Activated naive CD4-positive, alpha-beta T cell treated with anti-CD3 and anti-CD28 coated beads for 36 hours (primary cell): ENCODE measurements at regions of chr21 and their contacts with region 1.

Region 1: GRCh38 chr21:38766987-38767722 is 38.6 kb upstream of the ETS2 start:
- DNase-seq: peak; percentile 83
- H3K4me3 Mint-ChIP-seq: peak overlapping the region; percentile 51
- H3K27ac Mint-ChIP-seq: peak overlapping the region; percentile 82
- H3K4me1 Mint-ChIP-seq: peaks cover 42% of the 10 kb centered on the region
- H3K27me3 Mint-ChIP-seq: no peaks in the 10 kb centered on the region

Region 2: GRCh38 chr21:38755681-38756371 is 11.3 kb before region 1 on chr21:
- CTCF ChIA-PET with region 1: interaction called, 6 read pairs
- intact Hi-C with region 1: loop called (anchors 1 kb)
- DNase-seq: peak; percentile 41
- H3K4me3 Mint-ChIP-seq: no peak overlapping the region
- H3K27ac Mint-ChIP-seq: peak overlapping the region; percentile 44
- H3K4me1 Mint-ChIP-seq: peaks cover 8% of the 10 kb centered on the region
- H3K27me3 Mint-ChIP-seq: peaks cover 3% of the 10 kb centered on the region

Region 3: GRCh38 chr21:38787461-38788274 is 20.5 kb after region 1 on chr21:
- CTCF ChIA-PET with region 1: no interaction called
- intact Hi-C with region 1: no loop called
- DNase-seq: no peak
- H3K4me3 Mint-ChIP-seq: no peak overlapping the region
- H3K27ac Mint-ChIP-seq: no peak overlapping the region
- H3K4me1 Mint-ChIP-seq: peaks cover 6% of the 10 kb centered on the region
- H3K27me3 Mint-ChIP-seq: no peaks in the 10 kb centered on the region

Region 4: GRCh38 chr21:38798481-38798882 is 31.3 kb after region 1 on chr21:
- CTCF ChIA-PET with region 1: interaction called, 9 read pairs
- intact Hi-C with region 1: loop called (anchors 1 kb)
- DNase-seq: peak; percentile 30
- H3K4me3 Mint-ChIP-seq: no peak overlapping the region
- H3K27ac Mint-ChIP-seq: no peak overlapping the region
- H3K4me1 Mint-ChIP-seq: peaks cover 6% of the 10 kb centered on the region
- H3K27me3 Mint-ChIP-seq: peaks cover 2% of the 10 kb centered on the region

Region 5: DNA sequence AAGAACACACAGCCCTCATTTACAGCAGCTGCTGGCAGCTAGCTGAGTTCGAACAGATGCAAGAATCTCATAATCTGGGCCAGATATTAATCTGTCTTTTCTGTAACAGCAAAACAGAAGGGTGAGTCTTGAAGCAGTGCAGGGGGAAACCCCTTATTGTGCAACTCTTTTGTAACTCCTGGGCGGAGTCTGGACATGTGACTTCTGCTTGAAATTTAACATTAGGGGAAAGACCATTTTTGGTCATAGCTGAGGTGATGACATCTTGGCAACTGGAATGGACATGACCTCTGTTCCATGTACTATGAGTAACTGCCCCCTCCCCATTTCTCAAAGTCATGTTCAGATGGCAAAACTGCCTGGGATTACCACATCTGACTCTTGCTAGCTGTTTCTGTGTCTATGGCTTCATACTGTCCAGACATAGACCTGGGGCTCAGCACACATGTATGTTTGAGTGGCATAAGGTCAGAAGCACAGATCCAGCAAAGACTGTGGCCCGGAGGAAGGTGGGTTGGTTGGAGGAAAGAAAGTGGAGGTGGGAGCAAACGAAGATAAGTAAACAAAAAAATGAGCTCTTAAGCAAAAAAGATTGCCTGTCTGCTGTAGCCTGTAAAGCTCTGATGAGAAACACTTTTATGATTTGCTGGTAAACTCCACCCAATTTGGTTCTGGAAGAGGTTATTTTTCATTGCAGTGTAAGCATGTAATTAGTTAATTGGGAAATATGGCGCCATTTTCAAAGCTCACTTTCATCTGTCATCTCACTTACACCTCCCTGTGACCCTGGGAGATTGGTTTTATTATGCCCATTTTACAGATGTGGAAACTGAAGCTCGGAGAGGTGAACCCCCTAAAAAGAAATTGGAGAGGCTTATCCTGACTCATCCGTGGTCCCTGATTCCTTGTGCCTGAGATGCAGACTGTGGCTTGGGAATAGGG is 64.6 kb after region 1 on chr21:
- CTCF ChIA-PET with region 1: no interaction called
- intact Hi-C with region 1: loop called (anchors 1 kb)
- DNase-seq: peak; percentile 87
- H3K4me3 Mint-ChIP-seq: no peak overlapping the region
- H3K27ac Mint-ChIP-seq: peak overlapping the region; percentile 75
- H3K4me1 Mint-ChIP-seq: peaks cover 17% of the 10 kb centered on the region
- H3K27me3 Mint-ChIP-seq: no peaks in the 10 kb centered on the region

Region 6: GRCh38 chr21:39183237-39184007 is 416.3 kb after region 1 on chr21 and contains the start of gene PSMG1:
- CTCF ChIA-PET with region 1: no interaction called
- intact Hi-C with region 1: loop called (anchors 1 kb)
- DNase-seq: peak; percentile 94
- H3K4me3 Mint-ChIP-seq: peak within 1 kb of the TSS; percentile 92
- H3K27ac Mint-ChIP-seq: peak within 1 kb of the TSS; percentile 90
- H3K4me1 Mint-ChIP-seq: peaks cover 62% of the 10 kb centered on the region
- H3K27me3 Mint-ChIP-seq: no peaks in the 10 kb centered on the region
- total RNA-seq, gene PSMG1: 70.8 to 70.9 TPM

Region 7: GRCh38 chr21:39349211-39350093 is 582.3 kb after region 1 on chr21:
- CTCF ChIA-PET with region 1: no interaction called
- intact Hi-C with region 1: loop called (anchors 1 kb)
- DNase-seq: peak; percentile 98
- H3K4me3 Mint-ChIP-seq: peak overlapping the region; percentile 99
- H3K27ac Mint-ChIP-seq: peak overlapping the region; percentile 99
- H3K4me1 Mint-ChIP-seq: peaks cover 32% of the 10 kb centered on the region
- H3K27me3 Mint-ChIP-seq: no peaks in the 10 kb centered on the region